ENCODE measurements at regions of chr1 and their contacts with region 1.

Region 1: DNA sequence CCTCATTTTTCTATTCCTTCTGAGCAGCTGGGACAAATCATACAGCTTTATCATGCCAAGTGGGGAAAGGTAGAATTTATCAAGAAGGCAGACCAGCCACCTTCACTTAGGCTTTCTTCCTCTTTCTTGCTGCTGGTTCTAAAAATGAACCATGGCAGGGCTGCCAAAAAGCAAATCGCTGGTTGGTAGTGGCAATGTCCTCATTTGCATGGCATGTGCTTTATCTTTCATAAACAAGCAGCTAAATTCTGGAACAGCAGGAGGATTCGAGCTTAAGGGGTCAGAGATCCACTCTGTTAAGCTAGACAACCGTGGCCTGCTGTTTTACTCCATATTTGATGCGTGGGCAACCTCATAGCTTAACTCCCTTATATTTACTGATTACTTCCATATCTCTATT is 91.3 kb downstream of the RPE65 start:
- DNase-seq: no peak
- ATAC-seq: no peak

Region 2: GRCh38 chr1:69103705-69104385 is 745.4 kb after region 1 on chr1:
- intact Hi-C with region 1: loop called (anchors 5 kb)
- DNase-seq: no peak
- ATAC-seq: no peak